ENCODE measurements at regions of chr2 and their contacts with region 1.

Region 1: DNA sequence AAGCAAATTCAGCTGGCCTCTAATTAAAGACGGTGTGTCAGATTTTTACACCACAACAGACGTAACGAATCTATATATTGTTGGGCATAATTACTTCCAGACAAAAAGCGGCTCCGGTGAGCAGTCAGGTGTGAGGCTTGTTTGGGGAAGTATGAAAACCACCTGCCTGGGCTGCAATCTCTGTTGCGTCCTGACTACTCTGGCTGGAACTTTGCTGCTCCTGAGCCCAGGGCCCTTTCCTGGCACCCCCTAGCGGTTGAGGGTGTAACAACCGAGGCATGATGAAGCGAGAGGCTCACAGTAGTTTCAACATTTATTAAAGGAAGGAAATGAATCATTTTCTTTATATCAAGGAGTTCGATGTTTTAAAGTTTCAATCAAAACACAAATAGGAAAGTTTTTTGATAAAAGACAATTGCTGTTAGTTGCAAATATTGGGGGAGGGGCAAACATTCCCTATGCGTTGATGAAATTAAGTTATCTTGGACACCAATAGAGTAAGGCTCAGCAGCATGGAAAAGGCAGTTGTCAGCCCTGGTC is 10.6 kb upstream of the ITGB6 start:
- DNase-seq: peak; percentile 89
- H3K4me3 ChIP-seq: no peak overlapping the region
- H3K27ac ChIP-seq: no peak overlapping the region
- H3K4me1 ChIP-seq: no peaks in the 10 kb centered on the region
- H3K27me3 ChIP-seq: no peaks in the 10 kb centered on the region
- CTCF ChIP-seq: peak; percentile 92

Region 2: GRCh38 chr2:160109936-160110673 is 100.6 kb before region 1 on chr2:
- intact Hi-C with region 1: loop called (anchors 5 kb)
- DNase-seq: peak; percentile 75
- H3K4me3 ChIP-seq: no peak overlapping the region
- H3K27ac ChIP-seq: no peak overlapping the region
- H3K4me1 ChIP-seq: no peaks in the 10 kb centered on the region
- H3K27me3 ChIP-seq: no peaks in the 10 kb centered on the region
- CTCF ChIP-seq: peak; percentile 70

Measured in colonic mucosa (tissue), 4 donors.